Heart right ventricle (tissue), 16 donors: ENCODE measurements at regions of chr18 and their contacts with region 1.

Region 1: GRCh38 chr18:35459005-35459441 is 38.7 kb downstream of the INO80C start:
- DNase-seq: peak; percentile 65 to 77
- ATAC-seq: peak; percentile 83 to 97 (median 93)
- H3K4me3 ChIP-seq: no peak overlapping the region
- H3K27ac ChIP-seq: peak overlapping the region in 9 of 10 donors; percentile 56 to 76 (median 70)
- H3K4me1 ChIP-seq: peaks cover 12 to 64% (median 55%) of the 10 kb centered on the region in 9 donors
- H3K27me3 ChIP-seq: no peaks in the 10 kb centered on the region
- CTCF ChIP-seq: no peak

Region 2: GRCh38 chr18:34576622-34577021 is 882.4 kb before region 1 on chr18:
- intact Hi-C with region 1: loop called in 1 of 10 experiments (anchors 5 kb)
- DNase-seq: no peak
- ATAC-seq: no peak
- H3K4me3 ChIP-seq: no peak overlapping the region
- H3K27ac ChIP-seq: no peak overlapping the region
- H3K4me1 ChIP-seq: peaks cover 0 to 13% (median 4%) of the 10 kb centered on the region in 9 donors
- H3K27me3 ChIP-seq: no peaks in the 10 kb centered on the region
- CTCF ChIP-seq: no peak

Region 3: GRCh38 chr18:35497370-35498197 is 38.6 kb after region 1 on chr18 and contains the start of gene INO80C:
- intact Hi-C with region 1: loop called in 2 of 10 experiments (anchors 5 kb)
- DNase-seq: peak; percentile 93 to 94
- ATAC-seq: peak; percentile 98 to 99 (median 99)
- H3K4me3 ChIP-seq: peak within 1 kb of the TSS; percentile 4 to 69 (median 64)
- H3K27ac ChIP-seq: peak within 1 kb of the TSS; percentile 88 to 97 (median 95)
- H3K4me1 ChIP-seq: peaks cover 0 to 30% (median 18%) of the 10 kb centered on the region in 9 donors
- H3K27me3 ChIP-seq: no peaks in the 10 kb centered on the region
- CTCF ChIP-seq: no peak
- total RNA-seq, gene INO80C: 19.5 to 28.4 (median 25.5) TPM

Region 4: DNA sequence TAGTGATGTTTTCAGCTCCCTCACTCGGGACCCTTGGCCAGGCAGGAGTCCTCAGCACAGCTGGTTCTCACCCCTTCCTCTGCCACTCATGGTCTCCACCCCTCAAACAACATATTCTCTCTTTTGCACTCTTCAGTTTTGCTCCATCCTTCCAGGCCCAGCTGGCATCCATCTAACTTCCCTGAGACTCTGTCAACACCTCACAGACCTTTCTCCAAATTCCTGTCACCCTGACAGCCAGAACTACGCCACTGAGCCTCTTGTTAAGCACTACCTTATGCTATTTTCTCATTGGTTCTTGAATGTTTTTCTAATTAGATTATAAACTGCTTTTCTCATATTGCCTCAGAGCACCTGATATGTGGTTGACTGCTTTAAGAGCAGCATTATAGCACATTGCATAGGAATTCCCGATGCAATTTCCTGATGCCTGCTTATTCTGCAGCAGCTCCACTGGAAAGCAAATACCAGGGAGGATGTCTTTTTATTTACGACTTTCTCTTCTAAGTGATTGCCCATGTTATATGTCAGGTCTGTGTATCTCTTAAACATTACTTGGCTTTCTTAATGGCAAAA is 51.1 kb after region 1 on chr18:
- intact Hi-C with region 1: no loop called
- DNase-seq: no peak
- ATAC-seq: peak in 1 of 8 donors; percentile 53
- H3K4me3 ChIP-seq: no peak overlapping the region
- H3K27ac ChIP-seq: no peak overlapping the region
- H3K4me1 ChIP-seq: peaks cover 0 to 22% (median 7%) of the 10 kb centered on the region in 9 donors
- H3K27me3 ChIP-seq: peaks cover 0 to 2% (median 0%) of the 10 kb centered on the region in 7 donors
- CTCF ChIP-seq: no peak